ENCODE measurements at regions of chr6 and their contacts with region 1.

Region 1: DNA sequence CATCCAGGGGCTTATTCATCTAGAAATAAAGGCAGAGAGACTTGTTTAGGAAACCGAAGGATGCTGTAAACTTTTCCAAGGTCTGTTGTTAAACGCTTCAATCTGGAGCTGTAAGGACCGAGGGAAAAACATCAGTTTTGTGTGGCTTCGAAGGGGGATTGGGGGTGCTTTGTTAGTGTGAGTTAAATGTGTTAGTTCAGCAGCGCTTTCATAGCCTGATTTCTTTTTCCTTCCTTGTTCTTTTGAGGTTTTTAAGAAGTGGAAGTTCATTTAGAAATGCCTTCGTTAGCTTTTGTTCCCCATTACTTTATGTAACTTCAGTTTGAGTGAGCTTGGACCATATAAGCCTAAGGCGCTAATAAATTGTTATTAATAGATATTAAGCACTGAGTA is 1.5 kb downstream of the ANKS1A start:
- DNase-seq: no peak
- H3K4me3 ChIP-seq: peak overlapping the region; percentile 85
- H3K27ac ChIP-seq: peak overlapping the region; percentile 92
- H3K4me1 ChIP-seq: peaks cover 66% of the 10 kb centered on the region
- H3K27me3 ChIP-seq: no peaks in the 10 kb centered on the region
- CTCF ChIP-seq: no peak

Region 2: DNA sequence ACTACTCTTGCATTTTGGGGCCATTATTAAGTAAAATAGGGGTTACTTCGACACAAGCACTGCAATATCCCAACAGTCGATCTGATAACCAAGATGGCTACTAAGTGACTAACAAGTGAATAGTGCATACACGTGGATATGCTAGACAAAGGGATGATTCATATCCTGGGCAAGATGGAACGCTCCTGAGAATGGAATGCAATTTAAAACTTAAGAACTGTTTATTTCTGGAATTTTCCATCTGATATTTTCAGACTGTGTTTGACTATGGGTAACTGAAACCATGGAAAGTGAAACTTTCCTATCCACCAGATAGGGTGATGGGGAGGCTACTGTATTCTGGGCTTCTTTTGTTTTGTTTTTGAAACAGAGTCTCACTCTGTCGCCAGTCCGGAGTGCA is 260.5 kb before region 1 on chr6:
- intact Hi-C with region 1: no loop called
- DNase-seq: no peak
- H3K4me3 ChIP-seq: no peak overlapping the region
- H3K27ac ChIP-seq: peak overlapping the region; percentile 30
- H3K4me1 ChIP-seq: peaks cover 18% of the 10 kb centered on the region
- H3K27me3 ChIP-seq: no peaks in the 10 kb centered on the region
- CTCF ChIP-seq: no peak

Region 3: GRCh38 chr6:34969662-34970265 is 79.2 kb after region 1 on chr6:
- intact Hi-C with region 1: loop called (anchors 5 kb)
- DNase-seq: no peak
- H3K4me3 ChIP-seq: no peak overlapping the region
- H3K27ac ChIP-seq: no peak overlapping the region
- H3K4me1 ChIP-seq: peaks cover 32% of the 10 kb centered on the region
- H3K27me3 ChIP-seq: no peaks in the 10 kb centered on the region
- CTCF ChIP-seq: no peak

Region 4: GRCh38 chr6:35219683-35220326 is 329.3 kb after region 1 on chr6:
- intact Hi-C with region 1: no loop called
- DNase-seq: no peak
- H3K4me3 ChIP-seq: no peak overlapping the region
- H3K27ac ChIP-seq: peak overlapping the region; percentile 58
- H3K4me1 ChIP-seq: peaks cover 81% of the 10 kb centered on the region
- H3K27me3 ChIP-seq: peaks cover 20% of the 10 kb centered on the region
- CTCF ChIP-seq: no peak

Measured in left ventricle myocardium inferior (tissue), 1 donor.